ENCODE measurements at regions of chr20 and their contacts with region 1.

Region 1: GRCh38 chr20:31381766-31382165 is 8.6 kb downstream of the DEFB119 start:
- ATAC-seq: no peak
- H3K4me3 ChIP-seq: no peak overlapping the region
- H3K27ac ChIP-seq: no peak overlapping the region
- H3K4me1 ChIP-seq: no peaks in the 10 kb centered on the region

Region 2: DNA sequence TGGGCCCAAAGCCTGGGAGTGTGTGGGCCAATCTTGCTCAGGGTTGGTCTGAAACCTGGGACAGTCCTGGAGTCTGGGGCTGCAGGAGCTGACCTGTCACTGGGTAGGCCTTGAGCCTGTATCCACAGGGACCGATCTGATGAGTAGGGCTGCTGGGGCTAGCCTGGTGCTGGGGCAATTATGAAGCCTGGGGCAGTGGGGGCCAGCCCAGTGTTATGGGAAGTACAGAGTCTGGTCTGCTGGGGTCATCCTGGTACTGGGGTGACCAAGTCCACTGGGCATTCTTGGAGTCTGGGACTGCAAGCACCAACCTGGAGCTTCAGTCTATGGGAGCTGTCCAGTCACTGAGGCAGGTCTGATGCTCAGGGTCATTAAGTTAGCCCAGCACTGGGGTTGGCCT is 103.6 kb before region 1 on chr20:
- in situ Hi-C with region 1: loop called in 1 of 9 experiments (anchors 25 kb)
- ATAC-seq: no peak
- H3K4me3 ChIP-seq: no peak overlapping the region
- H3K27ac ChIP-seq: no peak overlapping the region
- H3K4me1 ChIP-seq: no peaks in the 10 kb centered on the region

Region 3: GRCh38 chr20:31879143-31879987 is 497.6 kb after region 1 on chr20:
- in situ Hi-C with region 1: no loop called
- ATAC-seq: peak; percentile 99 to 100 (median 99)
- H3K4me3 ChIP-seq: peak overlapping the region; percentile 34 to 44 (median 35)
- H3K27ac ChIP-seq: peak overlapping the region in 1 of 2 donors; percentile 4
- H3K4me1 ChIP-seq: peaks cover 0 to 5% of the 10 kb centered on the region in 2 donors